HepG2 (cell line): ENCODE measurements at regions of chr15 and their contacts with region 1.

Region 1: GRCh38 chr15:38699633-38700230 is 135.1 kb upstream of the RASGRP1 start:
- DNase-seq: peak; percentile 44
- ATAC-seq: peak; percentile 83
- H3K4me3 ChIP-seq: no peak overlapping the region
- H3K27ac ChIP-seq: no peak overlapping the region
- H3K4me1 ChIP-seq: peaks cover 13% of the 10 kb centered on the region
- H3K27me3 ChIP-seq: peaks cover 2 to 3% of the 10 kb centered on the region in 2 experiments; a peak in 1 of 5 replicates
- CTCF ChIP-seq: peak; percentile 75
- EP300 ChIP-seq: no peak
- POLR2A ChIP-seq: no peak
- RAD21 ChIP-seq: no peak

Region 2: DNA sequence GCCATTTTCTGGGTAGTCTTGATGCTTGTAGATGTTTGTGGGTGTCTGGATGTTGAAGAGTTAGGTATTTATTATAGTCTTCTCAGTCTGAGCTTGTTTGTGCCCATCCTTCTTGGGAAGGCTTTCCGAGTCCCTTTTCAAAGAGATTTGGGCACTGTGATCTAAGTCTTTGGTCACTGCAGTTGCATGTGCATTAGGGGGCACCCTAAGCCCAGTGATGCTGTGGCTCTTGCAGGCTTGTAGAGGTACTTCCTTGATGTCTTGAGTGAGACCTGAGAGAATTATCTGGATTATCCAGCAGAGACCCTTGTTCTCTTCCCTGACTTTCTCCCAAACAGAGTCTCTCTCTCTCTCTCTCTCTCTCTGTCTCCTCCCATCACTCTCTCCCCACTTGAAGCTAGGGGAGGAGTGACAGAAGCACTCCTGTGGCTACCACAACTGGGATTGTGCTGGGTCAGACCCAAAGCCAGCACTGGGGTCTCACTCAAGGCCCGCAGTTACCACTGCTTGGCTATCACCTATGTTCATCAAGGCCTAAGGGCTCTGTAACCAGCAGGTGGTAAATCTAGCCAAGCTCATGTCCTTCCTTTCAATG is 696.8 kb before region 1 on chr15:
- CTCF ChIA-PET with region 1: no interaction called
- POLR2A ChIA-PET with region 1: no interaction called
- in situ Hi-C with region 1: loop called (anchors 25 kb)
- intact Hi-C with region 1: no loop called
- DNase-seq: peak; percentile 49
- ATAC-seq: peak; percentile 85
- H3K4me3 ChIP-seq: no peak overlapping the region
- H3K27ac ChIP-seq: no peak overlapping the region
- H3K4me1 ChIP-seq: no peaks in the 10 kb centered on the region
- H3K27me3 ChIP-seq: no peaks in the 10 kb centered on the region
- CTCF ChIP-seq: peak; percentile 77
- EP300 ChIP-seq: no peak
- POLR2A ChIP-seq: no peak
- RAD21 ChIP-seq: peak; percentile 58

Region 3: DNA sequence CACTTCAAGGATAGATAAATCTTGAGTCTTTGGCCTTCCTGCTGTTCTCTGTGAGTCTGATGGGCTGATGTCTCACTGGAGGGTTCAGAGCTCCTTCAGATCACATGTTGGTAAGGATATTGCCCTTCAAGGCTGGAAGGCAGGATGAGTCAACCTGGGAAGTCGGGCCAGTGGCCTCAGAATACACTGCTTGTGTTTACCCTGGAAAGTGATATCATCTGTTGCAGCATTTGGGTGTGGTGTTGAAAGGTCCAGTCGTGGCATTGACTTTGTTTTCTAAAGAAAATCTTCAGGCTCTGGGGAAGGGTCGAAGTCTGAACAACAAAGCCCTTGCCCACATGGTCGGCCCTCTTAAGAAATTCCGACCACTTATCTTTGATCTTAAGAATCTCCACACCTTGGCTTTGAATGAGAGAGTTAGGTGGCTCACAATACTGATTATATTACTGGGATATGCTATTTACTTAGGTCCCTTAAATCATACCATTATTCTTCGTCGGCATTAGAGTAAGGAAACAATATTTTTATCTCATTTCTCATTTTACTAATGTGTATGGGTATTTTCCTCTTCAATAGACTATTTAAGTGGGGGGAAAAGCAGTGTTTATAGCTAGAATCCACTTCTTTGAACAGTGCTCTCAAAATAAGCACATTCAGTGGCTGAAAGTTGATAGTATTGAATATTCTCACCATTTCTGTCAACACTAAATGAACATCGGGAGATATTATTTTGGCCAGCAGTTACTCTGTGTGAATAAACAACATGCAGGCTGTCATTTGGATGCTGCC is 168.8 kb after region 1 on chr15:
- CTCF ChIA-PET with region 1: no interaction called
- POLR2A ChIA-PET with region 1: no interaction called
- in situ Hi-C with region 1: no loop called
- intact Hi-C with region 1: loop called (anchors 10 kb)
- DNase-seq: peak; percentile 11
- ATAC-seq: no peak
- H3K4me3 ChIP-seq: no peak overlapping the region
- H3K27ac ChIP-seq: no peak overlapping the region
- H3K4me1 ChIP-seq: peaks cover 8% of the 10 kb centered on the region
- H3K27me3 ChIP-seq: no peaks in the 10 kb centered on the region
- CTCF ChIP-seq: no peak
- EP300 ChIP-seq: no peak
- POLR2A ChIP-seq: no peak
- RAD21 ChIP-seq: no peak

Region 4: GRCh38 chr15:38886315-38887171 is 186.8 kb after region 1 on chr15:
- CTCF ChIA-PET with region 1: no interaction called
- POLR2A ChIA-PET with region 1: no interaction called
- in situ Hi-C with region 1: no loop called
- intact Hi-C with region 1: no loop called
- DNase-seq: no peak
- ATAC-seq: no peak
- H3K4me3 ChIP-seq: no peak overlapping the region
- H3K27ac ChIP-seq: no peak overlapping the region
- H3K4me1 ChIP-seq: peaks cover 11% of the 10 kb centered on the region
- H3K27me3 ChIP-seq: no peaks in the 10 kb centered on the region
- CTCF ChIP-seq: no peak
- EP300 ChIP-seq: no peak
- POLR2A ChIP-seq: no peak
- RAD21 ChIP-seq: no peak